Cardiac septum (tissue), 1 donor: ENCODE measurements at regions of chr9 and their contacts with region 1.

Region 1: GRCh38 chr9:114155263-114155972 is at the start of gene COL27A1:
- DNase-seq: peak; percentile 90
- total RNA-seq, gene COL27A1: 12.8 TPM

Region 2: DNA sequence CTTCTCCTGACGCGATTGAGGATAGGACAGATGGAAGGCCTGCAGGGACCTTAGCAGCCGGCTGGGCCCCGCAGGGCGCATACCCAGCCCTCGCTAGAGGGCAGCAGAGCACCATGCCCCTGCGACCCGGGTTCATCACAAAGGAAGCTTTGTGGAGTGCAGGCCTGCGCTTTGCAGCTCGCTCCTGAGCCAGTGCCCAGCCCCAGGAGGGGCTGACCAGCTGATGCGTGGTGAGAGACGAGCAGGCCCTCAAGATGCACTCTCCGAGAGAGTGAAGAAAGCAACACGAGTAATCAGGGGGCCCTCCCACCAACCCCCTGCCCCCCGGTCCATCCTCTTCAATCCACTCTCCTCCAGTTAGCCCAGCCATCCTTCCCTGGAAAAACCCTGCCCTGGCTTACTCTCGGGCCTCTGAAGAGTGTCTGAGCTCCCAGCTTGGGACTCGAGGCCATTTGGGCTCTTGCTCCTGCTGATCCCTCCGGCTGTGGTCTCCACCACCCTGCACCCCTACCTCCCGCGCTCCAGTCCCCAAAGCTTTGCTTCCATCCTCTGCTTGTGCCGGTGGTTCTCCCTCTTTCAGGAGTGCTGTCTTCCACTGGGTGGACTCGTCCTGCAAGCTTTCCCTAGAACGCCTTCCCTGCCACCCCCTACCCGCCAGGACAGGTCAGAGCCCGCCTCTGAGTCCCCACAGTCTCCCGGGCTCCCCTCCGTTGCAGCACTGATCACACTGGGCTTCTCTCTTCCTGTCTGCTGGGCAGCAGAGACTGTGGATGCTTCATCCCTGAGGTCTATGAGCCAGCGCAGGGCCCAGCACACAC is 47.2 kb before region 1 on chr9:
- intact Hi-C with region 1: loop called (anchors 1 kb)
- DNase-seq: peak; percentile 85

Region 3: DNA sequence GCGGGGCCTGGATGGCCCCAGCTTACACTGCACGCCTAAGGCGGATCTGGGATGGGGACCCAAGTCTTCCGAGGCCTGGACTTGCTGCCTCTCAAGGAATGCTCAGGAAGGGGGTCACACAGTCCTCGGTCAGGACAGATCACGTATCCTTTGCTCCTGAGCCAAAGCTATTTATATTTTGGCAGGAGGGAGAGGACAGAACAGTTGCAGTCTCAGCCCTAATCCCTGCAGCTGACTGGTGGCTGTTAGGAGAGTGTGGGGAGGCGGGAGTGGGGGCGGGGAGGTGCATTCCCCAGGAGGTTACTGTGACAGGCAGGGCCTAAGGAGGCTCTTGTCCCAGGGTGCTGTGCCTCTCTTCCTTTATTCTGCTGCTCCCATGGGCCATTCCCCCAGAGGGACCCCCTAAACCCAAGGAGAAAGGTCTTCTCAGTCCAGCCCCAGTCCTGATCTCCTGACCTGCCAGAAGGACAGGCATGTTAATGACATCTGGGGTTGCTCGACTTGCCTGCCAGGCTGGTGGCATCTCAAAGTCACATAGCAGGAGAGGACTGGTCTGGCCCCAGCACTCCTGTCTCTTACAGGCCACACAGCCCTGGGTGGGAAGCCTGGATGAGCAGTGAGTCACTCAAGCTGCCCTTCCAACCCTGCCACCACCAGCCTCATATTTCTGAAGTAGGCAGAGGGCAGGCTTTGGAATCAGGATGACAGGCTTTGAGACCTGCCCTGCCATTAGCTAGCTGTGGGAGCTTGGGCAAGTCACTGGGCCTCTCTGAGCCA is 51.8 kb after region 1 on chr9:
- intact Hi-C with region 1: loop called (anchors 5 kb)
- DNase-seq: peak; percentile 82

Region 4: DNA sequence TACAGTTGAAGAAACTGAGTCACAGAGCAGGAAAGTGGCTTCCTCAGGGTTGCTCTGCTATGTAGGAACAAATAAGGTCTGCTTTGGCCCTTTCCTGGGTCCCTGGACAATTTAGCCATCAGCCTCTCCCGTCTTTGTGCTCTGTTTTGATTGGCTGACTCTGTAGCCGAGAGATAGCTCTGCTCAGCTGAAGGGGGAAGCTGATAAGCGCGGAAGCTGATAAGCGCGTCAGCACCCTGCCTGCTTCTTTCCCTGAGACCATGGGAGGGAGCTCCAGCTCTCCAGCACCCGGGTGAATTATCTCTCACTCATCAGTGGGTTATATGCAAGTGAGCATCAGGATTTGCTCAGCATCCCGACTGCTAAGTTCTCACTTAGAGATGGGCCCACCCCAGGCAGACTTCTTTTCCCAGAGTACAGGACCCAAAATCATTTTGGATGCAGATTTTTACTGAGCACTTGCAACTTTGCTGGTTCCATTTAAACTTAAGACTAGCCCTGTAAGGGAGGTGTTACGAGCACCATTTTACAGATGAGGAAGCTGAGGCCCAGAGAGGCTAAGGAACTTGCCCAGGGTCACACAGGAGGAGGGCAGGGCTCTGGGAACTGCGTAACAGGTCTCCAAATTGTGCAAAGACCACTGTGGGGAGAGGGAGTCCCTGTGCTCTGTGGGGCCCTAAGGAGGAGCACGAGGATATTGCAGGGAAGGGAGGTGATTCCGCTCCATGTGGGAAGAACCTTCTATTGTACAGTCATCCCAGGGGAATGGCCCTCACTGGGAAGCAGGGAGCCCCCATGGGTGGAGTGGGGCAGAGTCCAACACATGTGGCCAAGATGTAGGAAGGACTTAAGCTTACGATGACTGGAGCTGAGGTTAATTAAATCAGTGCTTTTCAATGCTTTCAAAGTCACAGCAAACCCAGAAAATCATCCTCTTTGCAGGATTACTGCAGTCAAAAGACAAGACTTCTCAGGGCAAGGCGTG is 83.8 kb after region 1 on chr9:
- intact Hi-C with region 1: loop called (anchors 5 kb)
- DNase-seq: no peak

Region 5: GRCh38 chr9:114271641-114272081 is 116.2 kb after region 1 on chr9:
- intact Hi-C with region 1: loop called (anchors 5 kb)
- DNase-seq: no peak

Region 6: GRCh38 chr9:114291064-114291474 is 135.7 kb after region 1 on chr9:
- intact Hi-C with region 1: loop called (anchors 2 kb)
- DNase-seq: peak; percentile 81